ENCODE measurements at regions of chr21 and their contacts with region 1.

Region 1: DNA sequence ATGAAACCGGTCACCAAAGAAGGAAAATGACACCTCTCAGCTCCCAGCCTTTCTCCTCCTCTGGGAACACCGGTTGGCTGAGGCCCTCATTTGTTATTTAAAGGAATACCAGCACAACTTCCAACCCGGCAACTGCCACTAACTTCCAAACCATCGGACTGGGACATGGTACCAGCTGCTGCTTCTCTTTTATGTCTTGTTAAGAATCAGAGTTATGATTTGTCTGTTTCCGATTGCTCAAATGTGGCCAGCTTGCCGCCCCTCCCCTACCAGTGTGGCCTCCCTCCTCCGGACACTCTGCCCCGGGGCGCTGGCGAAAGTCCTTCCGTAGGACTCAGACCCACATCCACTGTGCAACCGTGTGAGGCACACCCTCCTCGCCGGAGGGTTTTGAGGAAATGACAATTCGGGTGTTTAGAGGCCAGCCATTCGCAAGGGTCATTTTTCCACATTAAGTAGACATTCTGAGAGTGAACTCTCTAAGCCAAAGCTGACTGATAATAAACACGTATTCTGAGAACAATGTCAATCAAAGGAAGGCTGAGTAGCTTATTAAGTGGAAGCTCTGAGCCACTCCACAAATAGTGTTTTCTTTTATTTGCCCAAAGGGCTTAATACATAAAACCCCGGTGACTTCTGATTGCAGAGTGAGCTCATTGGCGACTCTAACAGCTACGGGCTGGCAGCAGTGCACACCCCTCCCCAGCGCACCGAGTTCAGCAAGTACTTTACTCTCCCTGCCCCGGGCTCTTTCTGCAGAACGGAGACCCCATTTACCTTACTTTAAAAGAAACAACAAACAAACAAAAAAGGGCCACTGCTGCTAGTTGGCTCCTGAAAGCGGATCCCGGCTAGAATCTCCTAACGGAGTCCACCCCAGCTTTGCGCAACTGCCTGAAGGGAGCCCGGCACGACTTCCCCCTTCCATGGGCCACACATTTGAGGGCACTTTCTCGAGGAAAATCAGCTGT is 5.4 kb downstream of the RIPK4 start:
- DNase-seq: peak; percentile 86
- H3K4me3 Mint-ChIP-seq: peak overlapping the region; percentile 87
- H3K27ac Mint-ChIP-seq: peak overlapping the region; percentile 62
- H3K4me1 Mint-ChIP-seq: peaks cover 53% of the 10 kb centered on the region
- H3K27me3 Mint-ChIP-seq: no peaks in the 10 kb centered on the region
- CTCF ChIP-seq: no peak

Region 2: GRCh38 chr21:41304068-41304720 is 457.3 kb before region 1 on chr21:
- CTCF ChIA-PET with region 1: no interaction called
- POLR2A ChIA-PET with region 1: no interaction called
- intact Hi-C with region 1: no loop called
- DNase-seq: no peak
- H3K4me3 Mint-ChIP-seq: no peak overlapping the region
- H3K27ac Mint-ChIP-seq: no peak overlapping the region
- H3K4me1 Mint-ChIP-seq: no peaks in the 10 kb centered on the region
- H3K27me3 Mint-ChIP-seq: peaks cover 50% of the 10 kb centered on the region
- CTCF ChIP-seq: no peak

Region 3: GRCh38 chr21:41726945-41727783 is 34.3 kb before region 1 on chr21:
- CTCF ChIA-PET with region 1: interaction called, 3 read pairs
- POLR2A ChIA-PET with region 1: interaction called, 16 read pairs
- intact Hi-C with region 1: loop called (anchors 5 kb)
- DNase-seq: peak; percentile 92
- H3K4me3 Mint-ChIP-seq: peak overlapping the region; percentile 55
- H3K27ac Mint-ChIP-seq: peak overlapping the region; percentile 84
- H3K4me1 Mint-ChIP-seq: peaks cover 25% of the 10 kb centered on the region
- H3K27me3 Mint-ChIP-seq: no peaks in the 10 kb centered on the region
- CTCF ChIP-seq: no peak

Measured in MCF 10A (cell line).